SK-N-SH (cell line): ENCODE measurements at regions of chr15 and their contacts with region 1.

Region 1: DNA sequence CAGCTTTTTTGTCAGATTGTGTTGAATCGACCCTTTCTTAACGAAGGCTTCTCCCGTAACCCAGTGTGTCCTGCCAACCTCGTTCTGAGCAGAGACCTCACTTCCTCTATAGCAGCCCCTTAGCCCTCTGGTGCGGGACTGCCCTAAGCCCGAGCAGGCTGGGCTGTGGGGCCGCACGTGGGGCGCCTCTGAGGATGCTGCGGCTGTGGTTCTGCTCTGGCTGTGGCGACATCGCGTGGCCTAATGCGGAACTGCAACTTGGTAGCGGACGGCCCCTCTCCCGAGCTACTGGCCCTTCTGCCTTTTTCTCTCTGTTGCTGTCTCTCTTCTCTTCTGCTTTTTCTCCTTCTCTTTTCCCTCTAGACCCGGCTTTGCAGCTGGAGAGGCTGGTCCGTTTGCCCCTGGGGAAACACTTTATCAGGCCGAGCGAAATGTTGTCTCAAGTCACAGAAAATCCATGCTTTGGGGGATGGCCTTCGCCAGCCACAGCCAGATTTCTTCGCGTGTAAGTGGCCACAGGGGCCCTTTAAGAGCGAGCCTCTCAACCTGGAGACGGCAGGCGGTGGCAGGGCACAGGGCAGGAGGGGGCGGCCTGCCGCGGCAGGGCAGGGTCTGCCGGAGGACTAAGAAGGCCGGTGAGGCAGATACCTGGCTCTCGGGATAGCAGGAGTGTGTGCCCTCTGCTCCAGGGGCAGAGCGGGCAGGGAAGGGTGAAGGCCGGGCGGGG is 19.4 kb upstream of the KIF23 start:
- DNase-seq: peak; percentile 93
- H3K4me3 ChIP-seq: peak overlapping the region in 1 of 2 experiments; percentile 14; a peak in 1 of 4 replicates
- H3K27ac ChIP-seq: no peak overlapping the region
- H3K4me1 ChIP-seq: peaks cover 5 to 8% of the 10 kb centered on the region in 2 experiments; a peak in 2 of 4 replicates
- H3K27me3 ChIP-seq: no peaks in the 10 kb centered on the region
- CTCF ChIP-seq: peak; percentile 91
- EP300 ChIP-seq: no peak
- RAD21 ChIP-seq: peak; percentile 86

Region 2: GRCh38 chr15:69160141-69160993 is 234.4 kb before region 1 on chr15 and contains the start of gene GLCE:
- CTCF ChIA-PET with region 1: interaction called, 16 read pairs
- POLR2A ChIA-PET with region 1: interaction called, 3 read pairs
- DNase-seq: peak; percentile 98
- H3K4me3 ChIP-seq: peak within 1 kb of the TSS; percentile 82 to 94
- H3K27ac ChIP-seq: peak within 1 kb of the TSS; percentile 71 to 92
- H3K4me1 ChIP-seq: peaks cover 7 to 20% of the 10 kb centered on the region in 2 experiments
- H3K27me3 ChIP-seq: no peaks in the 10 kb centered on the region
- CTCF ChIP-seq: no peak
- EP300 ChIP-seq: no peak
- RAD21 ChIP-seq: 0 out of 2 replicates have a peak, but pooled peaks have one; percentile 5
- polyA plus RNA-seq, gene GLCE: 19.5 and 25.0 TPM in 2 replicates

Region 3: DNA sequence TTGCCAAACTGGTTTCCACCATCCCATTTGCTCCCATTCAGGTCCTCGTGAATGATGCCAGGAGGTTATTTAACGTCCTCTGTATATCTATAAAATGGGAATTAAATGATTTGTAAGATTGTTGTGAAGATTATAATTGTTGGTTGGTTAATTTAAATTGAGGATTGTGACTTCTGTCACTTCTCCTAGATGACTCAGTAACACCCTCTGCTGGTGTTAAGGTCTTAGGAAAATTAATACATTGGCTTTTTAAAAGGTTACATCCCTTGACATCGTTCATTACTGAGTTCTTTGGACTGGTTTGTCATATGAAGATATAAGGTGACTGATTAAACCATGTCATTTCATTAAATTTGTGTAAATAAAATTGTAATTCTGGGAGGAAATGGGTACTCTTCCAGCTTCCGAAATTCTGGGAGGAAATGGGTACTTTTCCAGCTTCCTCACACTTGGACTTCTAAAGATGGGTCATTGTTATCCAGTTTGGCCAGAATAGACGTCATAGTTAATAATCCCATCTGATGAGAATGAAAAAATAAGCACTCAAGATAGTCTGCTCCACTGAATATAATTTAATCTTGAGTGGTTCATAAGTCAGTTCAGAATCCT is 129.3 kb before region 1 on chr15:
- CTCF ChIA-PET with region 1: interaction called, 14 read pairs
- POLR2A ChIA-PET with region 1: no interaction called
- DNase-seq: no peak
- H3K4me3 ChIP-seq: no peak overlapping the region; a peak in 1 of 4 replicates
- H3K27ac ChIP-seq: no peak overlapping the region
- H3K4me1 ChIP-seq: no peaks in the 10 kb centered on the region
- H3K27me3 ChIP-seq: no peaks in the 10 kb centered on the region
- CTCF ChIP-seq: peak; percentile 60
- EP300 ChIP-seq: no peak
- RAD21 ChIP-seq: peak; percentile 66

Region 4: DNA sequence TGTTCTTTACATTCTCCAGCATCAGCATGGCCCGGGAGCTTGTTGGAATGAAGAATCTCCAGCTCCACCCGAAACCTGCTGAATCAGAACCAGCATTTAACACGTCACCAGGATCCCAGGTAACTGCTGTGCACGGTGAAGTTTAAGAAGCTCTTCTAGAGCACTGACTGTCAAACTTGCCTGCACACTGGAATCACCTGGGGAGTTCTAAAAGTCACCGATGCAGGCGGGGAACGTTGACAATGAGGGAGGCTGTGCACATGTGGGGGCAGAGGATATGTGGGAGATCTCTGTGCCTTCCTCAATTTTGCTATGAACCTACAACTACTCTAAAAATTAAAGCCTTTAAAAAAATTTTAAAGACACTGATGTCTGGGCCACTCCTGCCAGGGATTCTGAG is 115.1 kb before region 1 on chr15:
- CTCF ChIA-PET with region 1: interaction called, 11 read pairs
- POLR2A ChIA-PET with region 1: no interaction called
- DNase-seq: no peak
- H3K4me3 ChIP-seq: no peak overlapping the region
- H3K27ac ChIP-seq: no peak overlapping the region
- H3K4me1 ChIP-seq: no peaks in the 10 kb centered on the region; a peak in 2 of 4 replicates
- H3K27me3 ChIP-seq: no peaks in the 10 kb centered on the region
- CTCF ChIP-seq: no peak
- EP300 ChIP-seq: no peak
- RAD21 ChIP-seq: no peak

Region 5: GRCh38 chr15:69290346-69291164 is 104.2 kb before region 1 on chr15:
- CTCF ChIA-PET with region 1: interaction called, 14 read pairs
- POLR2A ChIA-PET with region 1: no interaction called
- DNase-seq: no peak
- H3K4me3 ChIP-seq: no peak overlapping the region
- H3K27ac ChIP-seq: no peak overlapping the region
- H3K4me1 ChIP-seq: peaks cover 0 to 18% of the 10 kb centered on the region in 2 experiments; a peak in 2 of 4 replicates
- H3K27me3 ChIP-seq: no peaks in the 10 kb centered on the region
- CTCF ChIP-seq: no peak
- EP300 ChIP-seq: no peak
- RAD21 ChIP-seq: no peak

Region 6: GRCh38 chr15:69380100-69380727 is 14.5 kb before region 1 on chr15:
- CTCF ChIA-PET with region 1: interaction called, 24 read pairs
- POLR2A ChIA-PET with region 1: no interaction called
- DNase-seq: no peak
- H3K4me3 ChIP-seq: no peak overlapping the region
- H3K27ac ChIP-seq: no peak overlapping the region
- H3K4me1 ChIP-seq: peaks cover 0 to under 1% of the 10 kb centered on the region in 2 experiments; a peak in 1 of 4 replicates
- H3K27me3 ChIP-seq: no peaks in the 10 kb centered on the region
- CTCF ChIP-seq: peak; percentile 24; the same call in 1 of the 2 replicates
- EP300 ChIP-seq: no peak
- RAD21 ChIP-seq: peak; percentile 29

Region 7: DNA sequence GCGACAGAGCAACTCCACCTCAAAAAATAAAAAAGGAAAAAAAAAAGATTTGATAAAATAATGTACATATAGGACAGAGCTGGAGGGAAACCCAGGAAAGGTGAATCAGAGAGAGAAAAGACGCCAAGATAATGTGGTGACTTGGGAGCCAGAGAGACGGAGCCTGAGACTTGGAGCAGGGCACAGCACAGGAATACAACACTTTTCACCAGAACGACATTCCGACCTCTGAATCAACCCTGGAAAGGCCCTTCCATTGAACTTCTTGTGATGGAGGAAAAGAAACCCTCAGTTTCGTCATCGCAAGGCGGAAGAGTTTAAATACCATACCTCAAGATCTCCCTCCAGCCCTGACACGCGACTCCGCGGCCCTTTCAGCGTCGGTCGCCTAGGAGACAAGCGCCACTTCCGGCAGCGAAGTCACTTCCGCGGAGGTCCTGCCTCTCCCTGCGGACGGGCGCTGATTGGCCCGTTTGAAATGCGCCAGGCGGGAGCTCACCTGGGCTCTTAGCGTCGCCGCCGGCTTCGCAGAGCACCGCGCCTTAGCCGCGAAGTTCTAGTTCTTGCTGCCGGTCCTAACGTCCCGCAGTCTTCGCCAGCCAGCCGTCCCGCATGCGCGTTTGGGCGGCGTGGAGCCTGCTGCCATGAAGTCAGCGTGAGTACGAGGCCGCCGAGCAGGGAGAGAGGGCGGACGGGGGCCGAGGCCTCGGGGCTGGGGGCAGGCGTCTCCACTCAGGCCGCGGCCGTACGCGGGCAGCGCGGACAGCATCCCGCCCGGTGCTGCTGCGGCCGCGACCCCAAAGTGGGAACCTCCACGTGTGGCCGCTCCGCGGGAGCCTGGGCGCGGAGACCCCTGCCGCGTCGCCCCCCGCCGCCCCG is 19.3 kb after region 1 on chr15 and contains the start of gene KIF23:
- CTCF ChIA-PET with region 1: interaction called, 24 read pairs
- POLR2A ChIA-PET with region 1: no interaction called
- DNase-seq: peak; percentile 95
- H3K4me3 ChIP-seq: peak within 1 kb of the TSS; percentile 82 to 95
- H3K27ac ChIP-seq: peak within 1 kb of the TSS; percentile 85 to 86
- H3K4me1 ChIP-seq: peaks cover 10 to 22% of the 10 kb centered on the region in 2 experiments; a peak in 3 of 4 replicates
- H3K27me3 ChIP-seq: no peaks in the 10 kb centered on the region
- CTCF ChIP-seq: no peak
- EP300 ChIP-seq: no peak
- RAD21 ChIP-seq: no peak
- polyA plus RNA-seq, gene KIF23: 23.3 and 25.8 TPM in 2 replicates

Region 8: DNA sequence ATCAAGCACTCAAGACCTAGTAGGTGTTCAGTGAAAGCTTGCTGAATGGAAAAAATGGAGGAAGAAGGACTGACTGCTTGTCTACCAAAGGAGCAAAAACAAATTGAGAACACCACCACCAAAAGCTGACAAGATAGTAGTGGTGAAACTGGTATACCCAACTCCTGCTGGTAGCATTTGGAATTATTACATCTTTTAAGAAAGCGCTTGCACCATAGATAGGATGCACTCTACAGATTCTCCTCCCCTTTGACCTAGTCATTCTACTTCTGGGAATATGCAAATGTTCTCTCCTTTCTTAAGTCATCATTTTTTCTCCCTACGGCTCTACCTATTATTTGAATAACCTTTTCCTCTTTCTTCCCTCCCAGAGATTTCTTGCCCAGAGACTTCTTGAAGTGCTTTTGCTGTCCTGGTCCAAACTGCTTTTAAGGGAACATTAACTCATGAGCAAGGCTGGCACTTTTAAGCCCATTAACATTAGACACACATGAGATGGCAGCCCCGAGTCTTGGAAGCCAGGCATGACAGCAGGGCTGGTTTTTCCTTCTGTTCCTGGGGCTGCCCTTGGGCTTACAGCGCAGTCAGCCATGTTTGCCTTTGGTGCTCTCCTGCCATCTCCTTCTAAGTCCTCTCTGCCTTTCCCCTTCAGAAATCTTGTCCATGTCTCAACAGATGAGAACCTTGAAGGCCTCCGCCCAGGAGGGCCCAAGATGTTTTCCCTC is 778.0 kb after region 1 on chr15:
- CTCF ChIA-PET with region 1: no interaction called
- POLR2A ChIA-PET with region 1: no interaction called
- DNase-seq: no peak
- H3K4me3 ChIP-seq: no peak overlapping the region
- H3K27ac ChIP-seq: peak overlapping the region in 1 of 2 experiments; percentile 95; a peak in 2 of 4 replicates
- H3K4me1 ChIP-seq: peaks cover 0 to 45% of the 10 kb centered on the region in 2 experiments; a peak in 2 of 4 replicates
- H3K27me3 ChIP-seq: no peaks in the 10 kb centered on the region; the same call in 1 of the 2 replicates
- CTCF ChIP-seq: no peak; the same call in 1 of the 2 replicates
- EP300 ChIP-seq: no peak
- RAD21 ChIP-seq: no peak